A673 (cell line): ENCODE measurements at regions of chr2 and their contacts with region 1.

Region 1: DNA sequence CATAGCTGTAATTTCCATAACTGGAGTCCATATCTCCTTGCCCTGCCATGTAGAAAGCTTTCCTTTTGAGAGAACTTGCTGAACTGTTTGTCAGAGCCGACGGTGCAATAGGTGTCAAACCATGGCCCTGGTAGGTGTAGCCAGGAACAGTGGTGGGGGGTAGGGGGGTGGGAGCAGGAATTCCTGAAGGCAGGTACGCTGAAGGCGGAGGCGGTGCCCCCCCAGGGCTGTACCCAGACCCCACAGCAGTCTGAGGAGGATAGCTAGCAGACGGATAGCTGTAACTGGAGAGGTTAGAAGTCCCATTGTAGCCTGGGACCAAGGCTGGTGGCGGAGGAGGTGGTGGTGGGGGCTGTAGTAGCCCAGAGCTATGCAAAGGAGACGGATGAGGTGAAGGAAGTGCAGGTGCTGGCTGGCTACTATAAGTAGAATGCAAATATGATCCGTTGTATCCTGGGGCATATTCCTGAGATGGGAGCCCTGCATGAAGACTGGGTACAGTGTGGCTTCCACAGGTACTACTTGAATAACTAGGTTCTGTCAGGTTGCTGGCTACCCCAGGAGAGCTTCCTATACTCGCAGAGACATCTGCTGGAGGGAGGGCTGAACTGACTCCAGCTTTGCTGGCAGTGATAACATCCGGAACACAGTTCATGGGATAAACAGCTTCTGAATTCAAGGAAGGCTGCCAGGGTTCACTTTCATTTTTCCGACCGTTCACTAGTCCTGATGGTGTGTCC is 124.8 kb downstream of the FIGN start:
- DNase-seq: peak; percentile 29
- H3K4me3 ChIP-seq: no peak overlapping the region
- H3K27ac ChIP-seq: no peak overlapping the region
- H3K4me1 ChIP-seq: no peaks in the 10 kb centered on the region
- H3K27me3 ChIP-seq: peaks cover 6% of the 10 kb centered on the region
- CTCF ChIP-seq: peak; percentile 46

Region 2: DNA sequence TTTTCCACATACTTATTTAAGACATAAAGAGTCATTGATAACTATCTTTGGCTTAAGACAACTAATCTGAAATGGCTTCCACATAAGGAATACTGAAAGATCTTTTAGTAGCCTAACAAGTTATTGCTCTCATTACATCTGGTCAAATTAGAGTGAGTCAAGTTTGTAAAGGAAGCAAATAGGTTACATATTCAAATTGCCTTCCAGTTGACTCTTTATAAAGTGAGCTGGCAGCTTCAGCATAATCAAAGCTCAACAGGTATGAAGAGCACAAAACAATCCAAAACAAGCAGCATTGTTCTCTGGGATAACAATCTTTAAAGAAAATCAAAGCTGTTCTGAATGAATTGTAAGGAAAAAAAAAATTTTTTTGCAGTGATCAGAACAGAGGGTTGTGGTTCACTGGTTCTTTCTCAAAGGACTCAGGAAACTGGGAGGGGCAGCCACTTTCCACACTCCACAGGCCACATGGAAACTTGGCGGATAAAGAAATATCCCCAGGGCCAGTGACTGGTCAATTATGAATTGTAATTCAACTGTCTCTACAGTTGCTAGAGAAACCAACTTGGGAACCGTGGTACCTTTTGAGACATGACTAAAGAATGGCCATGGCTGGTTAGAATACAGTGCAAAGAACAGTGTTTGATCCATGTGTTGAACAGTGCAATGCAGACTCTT is 403.2 kb before region 1 on chr2:
- CTCF ChIA-PET with region 1: no interaction called
- POLR2A ChIA-PET with region 1: no interaction called
- intact Hi-C with region 1: loop called (anchors 10 kb)
- DNase-seq: no peak
- H3K4me3 ChIP-seq: no peak overlapping the region
- H3K27ac ChIP-seq: no peak overlapping the region
- H3K4me1 ChIP-seq: no peaks in the 10 kb centered on the region
- H3K27me3 ChIP-seq: peaks cover 21% of the 10 kb centered on the region
- CTCF ChIP-seq: no peak